ENCODE measurements at regions of chr3 and their contacts with region 1.

Region 1: GRCh38 chr3:98573181-98573728 is 20.2 kb downstream of the CPOX start:
- DNase-seq: no peak
- ATAC-seq: peak; percentile 35
- H3K4me3 ChIP-seq: no peak overlapping the region
- H3K27ac ChIP-seq: peak overlapping the region; percentile 93
- H3K4me1 ChIP-seq: peaks cover 38 to 53% of the 10 kb centered on the region in 2 experiments
- H3K27me3 ChIP-seq: no peaks in the 10 kb centered on the region
- CTCF ChIP-seq: peak; percentile 60 to 83 (median 80)
- POLR2A ChIP-seq: no peak
- RAD21 ChIP-seq: peak; percentile 87

Region 2: GRCh38 chr3:98039322-98040024 is 533.8 kb before region 1 on chr3:
- CTCF ChIA-PET with region 1: no interaction called
- POLR2A ChIA-PET with region 1: no interaction called
- RAD21 ChIA-PET with region 1: no interaction called
- intact Hi-C with region 1: loop called (anchors 1 kb)
- DNase-seq: peak; percentile 89
- ATAC-seq: peak; percentile 91
- H3K4me3 ChIP-seq: peak overlapping the region; percentile 26 to 49
- H3K27ac ChIP-seq: no peak overlapping the region
- H3K4me1 ChIP-seq: peaks cover 0 to 8% of the 10 kb centered on the region in 2 experiments; a peak in 2 of 4 replicates
- H3K27me3 ChIP-seq: no peaks in the 10 kb centered on the region
- CTCF ChIP-seq: peak; percentile 77 to 97 (median 92)
- POLR2A ChIP-seq: no peak
- RAD21 ChIP-seq: peak; percentile 81

Region 3: GRCh38 chr3:98188545-98188944 is 384.7 kb before region 1 on chr3:
- CTCF ChIA-PET with region 1: no interaction called
- POLR2A ChIA-PET with region 1: no interaction called
- RAD21 ChIA-PET with region 1: no interaction called
- intact Hi-C with region 1: loop called (anchors 10 kb)
- DNase-seq: peak; percentile 7
- ATAC-seq: peak; percentile 80
- H3K4me3 ChIP-seq: no peak overlapping the region
- H3K27ac ChIP-seq: no peak overlapping the region
- H3K4me1 ChIP-seq: no peaks in the 10 kb centered on the region
- H3K27me3 ChIP-seq: no peaks in the 10 kb centered on the region
- CTCF ChIP-seq: peak; percentile 5 to 41 (median 40); a peak in 4 of 6 replicates
- POLR2A ChIP-seq: no peak
- RAD21 ChIP-seq: peak; percentile 28; the same call in 1 of the 2 replicates

Region 4: DNA sequence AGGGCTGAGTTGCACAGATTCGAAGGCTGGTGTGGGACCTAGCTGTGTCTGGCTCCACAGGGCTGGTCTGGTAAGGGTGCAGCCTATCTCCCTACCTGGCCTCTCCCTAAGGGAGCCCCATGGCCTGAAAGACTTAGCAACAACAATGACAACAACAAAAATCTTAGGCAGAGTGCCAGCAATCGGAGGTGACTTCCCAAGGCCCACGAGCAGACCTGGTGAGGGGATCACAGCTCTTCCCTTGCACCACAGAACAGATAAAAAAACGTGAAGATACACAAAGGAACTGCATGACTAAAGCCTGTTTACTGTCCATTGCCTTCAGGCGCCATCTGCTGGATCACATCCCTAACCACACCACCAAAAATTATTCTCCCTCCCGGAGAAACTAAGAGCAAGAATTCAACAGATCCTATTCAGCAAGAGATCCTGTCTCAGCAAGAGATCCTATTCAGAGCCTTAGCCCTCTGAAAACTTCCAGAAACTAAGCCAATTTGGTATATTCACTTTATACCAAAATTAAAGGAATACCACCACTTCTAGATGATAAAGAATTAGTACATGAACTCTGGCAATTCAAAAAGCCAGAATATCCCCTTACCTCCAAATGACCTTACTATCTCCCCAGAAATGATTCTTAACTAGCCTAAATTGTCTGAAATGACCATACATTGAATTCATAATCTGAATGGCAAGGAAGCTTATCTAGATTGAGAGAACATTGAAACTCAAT is 243.7 kb before region 1 on chr3:
- CTCF ChIA-PET with region 1: interaction called, 3 read pairs
- POLR2A ChIA-PET with region 1: no interaction called
- RAD21 ChIA-PET with region 1: interaction called in 1 of 2 experiments, 3 read pairs
- intact Hi-C with region 1: loop called (anchors 5 kb)
- DNase-seq: peak; percentile 33
- ATAC-seq: peak; percentile 80
- H3K4me3 ChIP-seq: no peak overlapping the region
- H3K27ac ChIP-seq: no peak overlapping the region
- H3K4me1 ChIP-seq: peaks cover 0 to 11% of the 10 kb centered on the region in 2 experiments; a peak in 2 of 4 replicates
- H3K27me3 ChIP-seq: 0 out of 2 replicates have a peak, but pooled peaks cover 4% of the 10 kb centered on the region
- CTCF ChIP-seq: peak; percentile 70 to 80 (median 77)
- POLR2A ChIP-seq: no peak
- RAD21 ChIP-seq: peak; percentile 81

Region 5: DNA sequence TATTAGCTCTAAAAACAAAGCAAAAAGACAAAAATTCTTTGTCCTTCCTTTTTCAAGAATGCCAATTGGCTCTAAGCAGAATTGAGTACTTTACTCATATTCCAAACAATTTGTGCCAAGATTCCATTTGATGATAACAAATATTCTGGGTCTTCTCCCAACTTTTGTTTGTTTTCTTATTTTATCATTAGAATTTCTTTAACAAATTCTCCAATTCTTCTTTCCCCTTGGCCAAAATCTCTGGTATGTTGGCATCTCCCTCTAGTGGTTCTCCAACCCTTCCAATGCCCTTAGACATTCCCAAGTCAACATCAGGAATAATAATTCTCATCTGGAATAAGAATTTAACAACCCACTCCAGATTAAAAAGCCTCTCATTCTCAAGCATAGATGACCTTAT is 14.8 kb after region 1 on chr3:
- CTCF ChIA-PET with region 1: interaction called, 12 read pairs
- POLR2A ChIA-PET with region 1: interaction called, 5 read pairs
- RAD21 ChIA-PET with region 1: no interaction called
- intact Hi-C with region 1: no loop called
- DNase-seq: no peak
- ATAC-seq: no peak
- H3K4me3 ChIP-seq: no peak overlapping the region
- H3K27ac ChIP-seq: peak overlapping the region; percentile 93; the same call in 1 of the 2 replicates
- H3K4me1 ChIP-seq: peaks cover 75 to 91% of the 10 kb centered on the region in 2 experiments
- H3K27me3 ChIP-seq: no peaks in the 10 kb centered on the region
- CTCF ChIP-seq: peak; percentile 37 to 70 (median 64); a peak in 5 of 6 replicates
- POLR2A ChIP-seq: no peak
- RAD21 ChIP-seq: peak; percentile 64

Region 6: GRCh38 chr3:98824256-98824655 is 251.0 kb after region 1 on chr3:
- CTCF ChIA-PET with region 1: interaction called, 5 read pairs
- POLR2A ChIA-PET with region 1: no interaction called
- RAD21 ChIA-PET with region 1: no interaction called
- intact Hi-C with region 1: loop called (anchors 1 kb)
- DNase-seq: no peak
- ATAC-seq: peak; percentile 56
- H3K4me3 ChIP-seq: no peak overlapping the region
- H3K27ac ChIP-seq: peak overlapping the region; percentile 35; the same call in 1 of the 2 replicates
- H3K4me1 ChIP-seq: peaks cover 4 to 28% of the 10 kb centered on the region in 2 experiments; a peak in 2 of 4 replicates
- H3K27me3 ChIP-seq: no peaks in the 10 kb centered on the region
- CTCF ChIP-seq: peak; percentile 38 to 54 (median 47); a peak in 5 of 6 replicates
- POLR2A ChIP-seq: no peak
- RAD21 ChIP-seq: peak; percentile 79

Region 7: GRCh38 chr3:98980915-98981596 is 407.8 kb after region 1 on chr3:
- CTCF ChIA-PET with region 1: no interaction called
- POLR2A ChIA-PET with region 1: no interaction called
- RAD21 ChIA-PET with region 1: no interaction called
- intact Hi-C with region 1: no loop called
- DNase-seq: peak; percentile 57
- ATAC-seq: peak; percentile 49
- H3K4me3 ChIP-seq: peak overlapping the region; percentile 16 to 37; a peak in 3 of 4 replicates
- H3K27ac ChIP-seq: peak overlapping the region; percentile 88
- H3K4me1 ChIP-seq: peaks cover 90 to 100% of the 10 kb centered on the region in 2 experiments
- H3K27me3 ChIP-seq: no peaks in the 10 kb centered on the region
- CTCF ChIP-seq: no peak
- POLR2A ChIP-seq: no peak
- RAD21 ChIP-seq: no peak